CD4-positive, alpha-beta memory T cell (primary cell): ENCODE measurements at regions of chr3 and their contacts with region 1.

Region 1: GRCh38 chr3:107531917-107532469 is 9.2 kb downstream of the BBX start:
- DNase-seq: no peak
- H3K4me3 ChIP-seq: no peak overlapping the region
- H3K4me3 Mint-ChIP-seq: peak overlapping the region in 1 of 8 donors; percentile 3
- H3K27ac ChIP-seq: no peak overlapping the region
- H3K27ac Mint-ChIP-seq: peak overlapping the region in 1 of 7 donors; percentile 13
- H3K4me1 ChIP-seq: peaks cover 15% of the 10 kb centered on the region
- H3K4me1 Mint-ChIP-seq: peaks cover 19 to 52% (median 28%) of the 10 kb centered on the region in 4 donors
- H3K27me3 ChIP-seq: no peaks in the 10 kb centered on the region
- H3K27me3 Mint-ChIP-seq: no peaks in the 10 kb centered on the region

Region 2: GRCh38 chr3:107543666-107544065 is 11.7 kb after region 1 on chr3:
- CTCF ChIA-PET with region 1: interaction called, 4 read pairs
- POLR2A ChIA-PET with region 1: no interaction called
- intact Hi-C with region 1: loop called (anchors 2 kb)
- DNase-seq: peak in 1 of 5 donors; percentile 3
- H3K4me3 ChIP-seq: no peak overlapping the region
- H3K4me3 Mint-ChIP-seq: no peak overlapping the region
- H3K27ac ChIP-seq: no peak overlapping the region
- H3K27ac Mint-ChIP-seq: no peak overlapping the region
- H3K4me1 ChIP-seq: no peaks in the 10 kb centered on the region
- H3K4me1 Mint-ChIP-seq: peaks cover 15 to 43% (median 28%) of the 10 kb centered on the region in 4 donors
- H3K27me3 ChIP-seq: no peaks in the 10 kb centered on the region
- H3K27me3 Mint-ChIP-seq: no peaks in the 10 kb centered on the region